ENCODE measurements at regions of chr19 and their contacts with region 1.

Region 1: GRCh38 chr19:8512115-8512967 is 1.6 kb downstream of the ZNF414 start:
- DNase-seq: no peak
- ATAC-seq: 0 out of 2 replicates have a peak, but pooled peaks have one; percentile 36
- H3K4me3 ChIP-seq: peak overlapping the region in 1 of 2 experiments; percentile 55; a peak in 1 of 4 replicates
- H3K27ac ChIP-seq: peak overlapping the region; percentile 91
- H3K4me1 ChIP-seq: peaks cover 9% of the 10 kb centered on the region
- H3K27me3 ChIP-seq: no peaks in the 10 kb centered on the region
- CTCF ChIP-seq: no peak

Region 2: DNA sequence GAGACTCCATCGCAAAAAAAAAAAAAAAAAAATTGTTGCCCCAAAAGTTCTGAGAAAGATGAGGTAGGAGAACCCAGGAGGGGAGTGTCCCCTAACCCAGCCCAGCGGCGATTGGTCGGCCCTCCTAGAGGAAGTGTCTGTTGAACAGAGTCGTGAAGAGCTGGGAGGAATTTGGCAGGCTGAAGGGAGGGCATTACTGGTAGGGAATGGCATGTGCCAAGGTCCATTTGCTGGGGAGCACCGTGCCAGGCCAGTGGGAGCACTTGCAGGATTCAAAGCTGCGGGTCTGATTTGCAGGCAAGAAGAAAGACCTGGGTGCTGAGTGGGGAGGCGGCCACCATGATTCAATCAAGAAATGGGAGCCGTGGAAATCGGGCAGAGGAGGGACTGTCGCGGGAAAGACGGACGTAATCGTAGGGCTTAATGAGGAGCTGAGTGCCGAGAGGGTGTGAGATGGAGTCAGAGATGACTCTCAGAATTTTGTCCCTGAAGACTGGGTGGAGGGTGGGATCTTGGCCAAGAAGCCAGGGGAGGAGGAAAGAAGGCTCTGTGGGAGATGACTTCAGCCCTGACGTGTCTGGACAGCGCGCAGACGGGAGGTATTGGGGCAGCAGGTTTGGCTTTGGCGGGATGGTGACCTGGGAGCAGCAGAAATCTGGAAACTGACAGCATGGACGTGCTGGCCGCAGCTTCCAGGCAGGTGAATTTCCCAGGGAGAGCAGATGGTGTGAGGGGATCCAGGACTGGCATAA is 287.8 kb before region 1 on chr19:
- CTCF ChIA-PET with region 1: no interaction called
- POLR2A ChIA-PET with region 1: no interaction called
- in situ Hi-C with region 1: no loop called
- intact Hi-C with region 1: no loop called
- DNase-seq: no peak
- ATAC-seq: no peak
- H3K4me3 ChIP-seq: no peak overlapping the region
- H3K27ac ChIP-seq: no peak overlapping the region
- H3K4me1 ChIP-seq: no peaks in the 10 kb centered on the region
- H3K27me3 ChIP-seq: no peaks in the 10 kb centered on the region
- CTCF ChIP-seq: no peak

Region 3: DNA sequence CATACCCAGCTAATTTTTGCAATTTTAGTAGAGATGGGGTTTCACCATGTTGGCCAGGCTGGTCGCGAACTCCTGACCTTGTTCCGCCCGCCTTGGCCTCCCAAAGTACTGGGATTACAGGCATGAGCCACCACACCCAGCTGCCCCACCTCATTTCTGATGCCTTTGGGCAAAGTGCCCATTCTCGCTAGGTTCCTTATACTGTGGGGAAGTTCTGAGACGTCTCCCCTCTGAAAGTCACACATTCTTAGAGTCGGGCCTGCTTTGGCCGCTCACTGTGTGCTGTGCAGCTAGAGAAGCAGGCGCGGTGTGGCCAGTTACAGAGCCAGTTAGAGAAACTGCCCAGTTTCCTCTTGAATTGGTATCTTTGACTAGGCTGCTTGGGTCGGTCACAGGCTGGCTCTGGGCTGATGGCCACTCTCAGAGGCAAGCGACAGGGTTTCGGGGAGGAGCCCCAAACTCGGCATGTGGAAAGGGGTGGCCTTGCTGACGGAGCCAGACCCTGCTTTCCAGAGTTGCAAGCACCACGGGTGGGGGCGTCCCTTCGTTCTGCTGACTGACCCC is 27.9 kb before region 1 on chr19:
- CTCF ChIA-PET with region 1: no interaction called
- POLR2A ChIA-PET with region 1: interaction called, 11 read pairs
- in situ Hi-C with region 1: no loop called
- intact Hi-C with region 1: no loop called
- DNase-seq: no peak
- ATAC-seq: no peak
- H3K4me3 ChIP-seq: no peak overlapping the region
- H3K27ac ChIP-seq: no peak overlapping the region
- H3K4me1 ChIP-seq: no peaks in the 10 kb centered on the region
- H3K27me3 ChIP-seq: no peaks in the 10 kb centered on the region
- CTCF ChIP-seq: no peak

Region 4: DNA sequence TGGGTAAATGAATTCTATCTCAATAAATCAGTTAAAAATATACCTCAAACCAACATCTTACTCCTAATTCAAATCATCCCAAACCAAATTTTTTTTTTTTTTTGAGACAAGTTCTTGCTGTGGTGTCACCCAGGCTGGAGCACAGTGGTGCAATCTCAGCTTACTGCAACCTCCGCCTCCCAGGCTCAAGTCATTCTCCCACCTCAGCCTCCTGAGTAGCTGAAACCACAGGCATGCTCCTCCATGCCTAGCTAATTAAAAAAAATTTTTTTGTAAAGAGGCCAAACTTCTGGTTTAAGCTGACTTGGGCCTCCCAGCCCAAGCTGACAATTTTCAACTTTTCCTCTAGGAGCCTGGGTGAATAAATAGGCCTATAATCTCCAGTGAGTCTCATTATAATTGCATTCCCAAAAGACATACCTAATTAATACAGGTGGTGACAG is 1446.1 kb after region 1 on chr19:
- CTCF ChIA-PET with region 1: no interaction called
- POLR2A ChIA-PET with region 1: interaction called, 14 read pairs
- in situ Hi-C with region 1: no loop called
- intact Hi-C with region 1: no loop called
- DNase-seq: no peak
- ATAC-seq: no peak
- H3K4me3 ChIP-seq: no peak overlapping the region
- H3K27ac ChIP-seq: no peak overlapping the region
- H3K4me1 ChIP-seq: no peaks in the 10 kb centered on the region
- H3K27me3 ChIP-seq: no peaks in the 10 kb centered on the region
- CTCF ChIP-seq: no peak